Endothelial cell of umbilical vein (primary cell): ENCODE measurements at regions of chr10 and their contacts with region 1.

Region 1: DNA sequence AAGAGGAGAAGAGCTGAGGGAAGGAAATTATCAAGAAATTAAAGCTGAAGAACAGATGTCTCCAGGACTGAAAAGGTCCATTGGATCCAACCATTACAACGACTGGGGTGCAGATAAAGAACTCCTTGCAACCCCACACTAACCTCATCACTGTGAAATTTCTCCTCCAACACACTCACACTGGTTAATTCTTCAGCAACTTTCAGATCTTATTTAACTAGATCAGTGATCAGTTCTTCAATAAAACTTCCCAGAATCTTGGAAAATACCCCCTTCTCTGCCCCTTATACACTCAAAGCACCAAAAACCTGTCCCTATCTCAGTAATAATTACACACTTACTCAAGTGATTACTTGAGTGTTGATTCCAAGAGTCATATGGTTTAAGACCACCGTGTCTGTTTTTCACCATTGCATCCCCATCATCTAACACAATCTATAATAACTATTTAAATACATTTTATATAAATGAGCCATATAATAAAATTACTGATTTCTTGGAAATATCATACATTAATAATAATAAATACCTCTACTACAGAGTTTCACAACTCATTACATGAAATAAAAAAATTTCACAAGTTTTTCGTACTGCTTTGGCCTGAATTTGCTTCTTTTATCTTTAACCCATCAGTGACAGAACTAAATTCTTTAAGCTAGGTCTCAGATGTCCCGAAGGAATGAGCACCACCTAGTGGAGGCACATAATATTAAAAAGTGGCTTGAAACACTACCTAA is 123.7 kb downstream of the MPP7 start:
- DNase-seq: peak; percentile 71
- H3K4me3 ChIP-seq: no peak overlapping the region
- H3K27ac ChIP-seq: no peak overlapping the region
- H3K4me1 ChIP-seq: peaks cover 13% of the 10 kb centered on the region
- H3K27me3 ChIP-seq: no peaks in the 10 kb centered on the region
- CTCF ChIP-seq: peak; percentile 37 to 40
- POLR2A ChIP-seq: no peak

Region 2: DNA sequence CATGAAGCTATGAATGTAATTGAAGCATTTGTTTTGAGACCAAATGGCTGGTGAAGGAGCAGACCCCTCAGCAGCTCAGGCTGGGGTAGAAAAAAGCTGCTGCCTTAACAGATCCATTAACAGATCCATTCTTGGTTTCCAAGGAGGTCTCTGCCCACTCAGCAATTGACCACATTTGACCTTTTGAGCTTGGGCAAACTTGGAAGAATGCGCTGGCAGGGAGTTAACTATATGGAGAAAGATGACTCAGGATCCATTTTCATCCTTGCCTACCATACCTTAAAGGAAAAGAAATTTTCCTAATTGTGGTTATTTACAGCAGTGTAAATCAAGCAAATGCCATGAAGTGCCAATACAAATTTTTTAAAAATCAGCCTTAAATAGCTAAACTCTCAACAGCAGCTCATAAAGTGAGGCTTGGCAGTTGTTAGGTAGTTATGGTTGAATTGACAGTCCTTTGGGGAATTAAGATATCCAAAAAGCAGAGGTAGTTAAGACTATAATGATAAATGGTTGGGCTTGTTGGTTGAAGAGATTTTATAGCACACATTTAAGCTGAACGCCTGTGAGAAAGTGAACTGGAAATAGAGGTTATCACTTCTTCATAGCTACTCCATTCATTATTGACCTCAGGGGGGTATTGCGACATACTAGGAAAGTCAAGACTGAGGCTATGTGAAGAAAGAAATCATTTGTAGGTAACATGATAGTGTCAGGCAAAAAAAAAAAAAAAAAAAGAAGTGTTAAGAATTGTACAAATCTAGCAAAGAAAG is 517.5 kb before region 1 on chr10:
- CTCF ChIA-PET with region 1: no interaction called
- POLR2A ChIA-PET with region 1: no interaction called
- dilution Hi-C with region 1: no loop called
- intact Hi-C with region 1: loop called (anchors 5 kb)
- DNase-seq: no peak
- H3K4me3 ChIP-seq: no peak overlapping the region
- H3K27ac ChIP-seq: no peak overlapping the region
- H3K4me1 ChIP-seq: no peaks in the 10 kb centered on the region
- H3K27me3 ChIP-seq: peaks cover 0 to 8% of the 10 kb centered on the region in 2 experiments
- CTCF ChIP-seq: no peak
- POLR2A ChIP-seq: no peak

Region 3: DNA sequence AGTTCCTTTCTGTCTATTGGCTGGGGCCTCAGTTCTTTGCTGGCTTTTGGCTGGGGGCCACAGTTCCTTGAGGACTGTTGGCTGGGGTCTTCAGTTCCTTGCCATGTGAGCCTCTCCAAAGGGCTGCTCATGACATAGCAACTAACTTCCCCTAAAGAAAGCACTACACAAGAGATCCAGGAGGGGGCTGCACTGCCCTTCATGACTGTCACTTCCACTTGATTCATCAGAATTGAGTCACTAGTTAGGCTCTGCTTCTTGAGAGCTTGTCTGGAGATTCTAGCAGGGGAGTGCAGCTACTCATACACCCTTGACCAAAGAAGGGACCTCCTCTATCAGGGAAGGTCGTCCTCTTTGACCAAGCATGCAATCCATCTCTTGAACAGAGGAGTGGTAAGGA is 395.5 kb before region 1 on chr10:
- CTCF ChIA-PET with region 1: interaction called, 117 read pairs
- POLR2A ChIA-PET with region 1: no interaction called
- dilution Hi-C with region 1: no loop called
- intact Hi-C with region 1: loop called (anchors 1 kb)
- DNase-seq: peak; percentile 64
- H3K4me3 ChIP-seq: no peak overlapping the region
- H3K27ac ChIP-seq: no peak overlapping the region
- H3K4me1 ChIP-seq: no peaks in the 10 kb centered on the region
- H3K27me3 ChIP-seq: peaks cover 3 to 5% of the 10 kb centered on the region in 2 experiments
- CTCF ChIP-seq: peak; percentile 54 to 68
- POLR2A ChIP-seq: no peak

Region 4: GRCh38 chr10:27998254-27999004 is 180.7 kb before region 1 on chr10:
- CTCF ChIA-PET with region 1: interaction called, 13 read pairs
- POLR2A ChIA-PET with region 1: no interaction called
- dilution Hi-C with region 1: no loop called
- intact Hi-C with region 1: loop called (anchors 1 kb)
- DNase-seq: peak; percentile 51
- H3K4me3 ChIP-seq: peak overlapping the region; percentile 41 to 87 (median 71)
- H3K27ac ChIP-seq: peak overlapping the region; percentile 32
- H3K4me1 ChIP-seq: peaks cover 6% of the 10 kb centered on the region
- H3K27me3 ChIP-seq: no peaks in the 10 kb centered on the region
- CTCF ChIP-seq: no peak
- POLR2A ChIP-seq: peak; percentile 76

Region 5: DNA sequence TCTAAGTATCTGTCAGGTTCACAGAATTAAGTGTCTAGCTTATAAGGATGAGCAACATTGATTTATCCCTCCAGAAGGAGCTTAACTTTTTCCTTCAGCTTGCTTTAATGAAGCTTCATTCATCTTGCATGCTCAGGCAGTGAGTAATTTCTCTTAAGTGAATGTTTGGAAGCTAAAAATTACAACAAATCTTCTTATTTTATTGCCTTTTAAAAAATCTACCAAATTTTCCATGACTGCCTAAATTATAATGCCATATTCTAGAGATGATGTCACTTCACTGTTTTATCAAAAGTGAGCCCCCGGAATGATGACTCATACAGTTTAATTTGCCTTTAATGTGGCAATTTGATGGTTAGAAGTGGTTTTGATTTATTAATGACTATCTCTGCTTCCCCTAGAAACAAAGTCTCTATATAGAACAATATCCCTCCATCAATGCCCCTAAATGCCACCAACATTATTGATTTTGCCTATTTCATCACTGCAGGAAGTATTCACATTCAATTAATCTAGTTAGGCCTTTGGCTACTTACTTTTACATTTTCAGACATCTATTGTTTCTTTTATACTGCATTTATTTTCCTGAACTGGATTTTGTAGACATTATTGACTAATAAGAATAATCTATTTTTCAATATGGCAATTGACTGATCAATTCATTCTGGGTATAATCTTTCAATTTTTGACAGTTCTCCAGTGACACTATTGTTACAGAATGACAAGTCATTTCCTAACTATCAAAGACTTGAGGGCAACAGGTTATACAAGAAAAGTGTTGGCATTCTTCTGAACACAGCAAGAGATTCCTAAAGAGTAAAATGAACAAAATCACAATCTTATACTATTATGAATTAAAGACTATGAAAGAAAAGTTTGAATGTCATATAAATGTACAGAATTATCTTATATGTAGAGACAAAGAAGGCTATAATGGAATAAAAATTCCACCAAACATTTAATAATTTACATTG is 41.0 kb before region 1 on chr10:
- CTCF ChIA-PET with region 1: interaction called, 10 read pairs
- POLR2A ChIA-PET with region 1: no interaction called
- dilution Hi-C with region 1: no loop called
- intact Hi-C with region 1: loop called (anchors 1 kb)
- DNase-seq: peak; percentile 60
- H3K4me3 ChIP-seq: peak overlapping the region in 1 of 3 experiments; percentile 17
- H3K27ac ChIP-seq: peak overlapping the region; percentile 76
- H3K4me1 ChIP-seq: peaks cover 45% of the 10 kb centered on the region
- H3K27me3 ChIP-seq: no peaks in the 10 kb centered on the region
- CTCF ChIP-seq: no peak
- POLR2A ChIP-seq: no peak